ENCODE measurements at regions of chr12 and their contacts with region 1.

Region 1: DNA sequence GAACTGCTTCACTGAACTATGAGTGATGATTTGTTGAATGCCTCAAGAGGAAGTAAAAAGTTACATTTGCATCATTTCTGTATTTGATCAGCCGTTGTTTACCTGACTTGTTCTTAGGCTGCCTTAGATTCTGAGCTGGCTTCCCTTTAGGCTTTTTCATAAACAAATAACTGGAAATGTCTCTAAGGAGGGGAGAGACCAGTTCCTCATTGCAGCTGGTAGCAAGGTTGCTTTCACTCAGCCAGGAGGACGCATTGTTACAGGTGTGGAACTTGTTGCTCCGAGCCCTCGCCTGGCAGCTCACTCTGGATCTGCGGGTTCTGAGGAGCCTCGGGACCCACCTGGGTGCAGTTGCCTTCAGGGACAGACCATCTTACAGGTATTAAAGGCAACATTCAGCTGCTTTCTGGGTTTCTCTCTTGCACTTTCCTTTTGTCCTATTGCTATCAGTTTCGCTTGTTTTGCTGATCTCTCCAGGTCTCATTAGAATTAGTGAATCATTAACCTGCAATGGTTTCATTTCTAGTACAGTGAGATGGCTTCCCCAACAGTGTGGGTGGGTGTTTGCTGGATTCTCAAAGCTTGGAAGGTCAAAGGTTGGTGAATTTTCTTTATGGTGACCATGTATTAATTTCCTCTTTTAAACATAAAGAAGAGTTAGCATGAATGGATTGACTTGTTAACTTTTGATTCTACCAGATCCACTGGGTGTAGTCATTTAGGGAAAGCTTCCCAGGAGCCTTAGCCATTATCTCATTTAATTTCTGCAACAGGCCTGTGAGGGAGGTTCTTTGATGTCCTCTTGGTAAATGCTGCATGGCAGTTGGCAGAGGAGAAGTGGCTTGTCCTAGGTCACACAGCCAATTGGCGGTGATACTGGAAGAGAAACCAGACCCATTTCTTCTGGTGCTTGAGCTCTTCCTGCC is at the start of gene PLEKHG7:
- DNase-seq: peak; percentile 29
- ATAC-seq: peak; percentile 83
- H3K4me3 Mint-ChIP-seq: peak within 1 kb of the TSS; percentile 75
- H3K27ac Mint-ChIP-seq: peak within 1 kb of the TSS; percentile 74
- H3K4me1 Mint-ChIP-seq: peaks cover 38% of the 10 kb centered on the region
- H3K27me3 Mint-ChIP-seq: no peaks in the 10 kb centered on the region
- CTCF ChIP-seq: no peak
- total RNA-seq, gene PLEKHG7: 3.4 and 4.1 TPM in 2 replicates

Region 2: GRCh38 chr12:92445253-92446082 is 257.5 kb before region 1 on chr12:
- CTCF ChIA-PET with region 1: no interaction called
- POLR2A ChIA-PET with region 1: no interaction called
- intact Hi-C with region 1: no loop called
- DNase-seq: peak; percentile 55
- ATAC-seq: peak; percentile 71
- H3K4me3 Mint-ChIP-seq: peak overlapping the region; percentile 67
- H3K27ac Mint-ChIP-seq: peak overlapping the region; percentile 97
- H3K4me1 Mint-ChIP-seq: peaks cover 95% of the 10 kb centered on the region
- H3K27me3 Mint-ChIP-seq: no peaks in the 10 kb centered on the region
- CTCF ChIP-seq: no peak

Region 3: DNA sequence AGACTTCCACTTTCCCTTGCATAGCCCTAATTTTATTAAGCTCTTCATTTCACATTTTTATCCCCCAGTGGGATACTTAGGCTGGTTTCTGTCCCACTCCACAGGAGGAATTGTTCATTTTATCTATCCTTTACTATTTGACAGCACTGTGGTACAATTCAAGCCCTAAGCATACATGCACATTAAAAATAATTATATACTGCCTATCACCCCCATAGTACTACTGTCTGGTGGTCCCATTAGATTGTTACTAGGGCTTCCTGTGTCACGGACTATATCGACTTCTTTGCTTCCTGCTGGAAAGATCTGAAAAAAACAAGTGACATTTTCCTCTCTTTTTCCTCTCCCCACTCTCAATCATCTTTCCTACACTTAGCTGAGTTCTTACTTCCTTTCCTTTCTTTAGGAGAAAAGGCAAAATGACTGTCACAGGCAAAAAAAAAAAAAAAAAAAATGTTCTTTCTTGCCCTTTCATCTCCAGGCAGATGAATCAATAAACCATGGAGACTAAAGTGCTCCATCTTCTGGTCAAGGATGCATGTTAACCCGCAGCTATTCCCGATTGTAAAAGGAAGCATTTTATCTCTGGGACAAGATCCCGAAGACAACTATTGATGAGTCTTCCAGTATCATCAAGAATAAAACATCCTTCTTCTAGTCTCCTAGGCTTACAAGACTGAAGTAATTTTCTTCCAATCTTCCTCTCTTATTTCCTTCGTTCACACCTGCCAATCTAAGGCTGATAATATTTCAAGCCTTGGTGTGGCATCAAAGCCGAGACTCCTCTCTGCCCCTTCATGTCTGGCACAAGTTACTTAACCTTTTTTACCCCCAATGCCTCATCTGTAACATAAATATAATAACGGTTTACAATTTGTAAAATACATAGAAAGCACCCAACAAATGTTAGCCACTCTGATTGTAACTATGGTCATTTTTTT is 94.6 kb before region 1 on chr12:
- CTCF ChIA-PET with region 1: no interaction called
- POLR2A ChIA-PET with region 1: no interaction called
- intact Hi-C with region 1: no loop called
- DNase-seq: no peak
- ATAC-seq: no peak
- H3K4me3 Mint-ChIP-seq: peak overlapping the region; percentile 44
- H3K27ac Mint-ChIP-seq: no peak overlapping the region
- H3K4me1 Mint-ChIP-seq: peaks cover 9% of the 10 kb centered on the region
- H3K27me3 Mint-ChIP-seq: no peaks in the 10 kb centered on the region
- CTCF ChIP-seq: no peak

Region 4: DNA sequence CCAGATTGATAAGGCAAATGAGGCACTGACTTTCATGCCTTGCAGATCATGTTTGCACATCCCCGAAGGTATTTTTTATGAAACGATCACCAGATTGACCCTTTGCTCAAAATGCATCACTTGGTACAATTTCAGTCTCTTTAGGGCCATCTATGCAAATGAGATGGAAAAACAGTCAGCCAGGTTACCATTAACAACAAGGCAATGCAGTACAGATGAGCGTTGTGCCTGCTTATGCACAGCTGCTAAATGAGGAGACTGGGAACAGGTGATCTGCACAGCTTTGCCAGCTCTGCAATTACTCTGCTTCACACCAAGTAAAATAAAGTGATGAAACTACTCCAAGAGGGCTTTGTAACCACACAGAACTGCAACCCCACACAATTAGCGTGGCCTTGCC is 26.3 kb before region 1 on chr12:
- CTCF ChIA-PET with region 1: no interaction called
- POLR2A ChIA-PET with region 1: no interaction called
- intact Hi-C with region 1: no loop called
- DNase-seq: no peak
- ATAC-seq: no peak
- H3K4me3 Mint-ChIP-seq: no peak overlapping the region
- H3K27ac Mint-ChIP-seq: no peak overlapping the region
- H3K4me1 Mint-ChIP-seq: peaks cover 7% of the 10 kb centered on the region
- H3K27me3 Mint-ChIP-seq: no peaks in the 10 kb centered on the region
- CTCF ChIP-seq: no peak

Region 5: DNA sequence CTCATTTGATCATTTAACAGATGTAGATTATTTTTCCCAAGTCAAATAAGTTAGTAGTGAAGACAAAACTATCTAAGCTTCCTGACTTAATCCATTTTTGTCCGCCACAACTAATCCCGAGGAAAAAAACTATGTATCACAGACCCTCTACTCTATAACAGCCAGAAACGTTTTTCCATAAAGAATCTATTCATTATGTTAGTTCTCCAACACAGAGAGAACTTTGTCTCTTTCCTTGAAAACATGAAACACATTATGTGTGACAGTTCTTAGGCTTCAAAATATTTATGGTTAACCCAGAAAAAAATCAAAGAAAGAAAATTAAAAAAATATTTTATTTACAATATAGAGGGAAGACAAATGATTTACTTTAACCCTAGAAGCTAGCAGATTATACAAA is 99.9 kb after region 1 on chr12:
- CTCF ChIA-PET with region 1: no interaction called
- POLR2A ChIA-PET with region 1: no interaction called
- intact Hi-C with region 1: no loop called
- DNase-seq: no peak
- ATAC-seq: no peak
- H3K4me3 Mint-ChIP-seq: no peak overlapping the region
- H3K27ac Mint-ChIP-seq: no peak overlapping the region
- H3K4me1 Mint-ChIP-seq: no peaks in the 10 kb centered on the region
- H3K27me3 Mint-ChIP-seq: no peaks in the 10 kb centered on the region
- CTCF ChIP-seq: no peak

Region 6: DNA sequence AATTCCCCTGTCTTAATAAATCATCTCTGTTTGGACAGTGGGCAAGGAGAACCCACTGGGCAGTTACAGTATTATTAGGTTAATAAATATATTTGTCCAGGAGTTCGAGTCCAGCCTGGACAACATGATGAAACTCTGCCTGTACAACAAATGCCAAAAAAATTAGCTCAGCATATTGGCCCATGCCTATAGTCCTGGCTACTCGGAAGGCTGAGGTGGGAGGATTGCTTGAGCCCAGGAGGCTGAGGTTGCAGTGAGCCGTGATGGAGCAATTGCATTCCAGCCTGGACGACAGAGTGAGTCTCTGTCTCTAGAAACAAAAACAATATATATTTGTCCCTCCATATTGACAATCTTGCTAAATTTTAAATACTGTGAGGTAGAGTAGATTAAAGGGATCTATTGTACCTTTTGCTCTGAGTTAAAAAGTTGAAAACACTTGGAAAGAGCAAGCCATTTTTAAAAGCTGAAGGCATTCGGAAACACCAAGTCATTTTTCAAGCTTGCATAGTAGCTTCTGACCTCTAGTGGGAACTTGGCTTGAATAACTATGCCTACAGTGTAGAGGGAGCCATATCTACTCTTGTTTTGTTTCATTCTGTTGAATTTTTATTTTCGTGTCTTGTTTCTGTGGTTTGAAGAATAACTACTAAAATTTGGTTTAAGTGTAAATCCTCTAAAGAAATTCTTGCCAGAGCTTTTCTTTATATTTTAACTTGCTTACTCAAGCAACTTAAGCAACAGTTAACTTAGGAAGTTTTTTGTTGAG is 240.6 kb after region 1 on chr12:
- CTCF ChIA-PET with region 1: no interaction called
- POLR2A ChIA-PET with region 1: no interaction called
- intact Hi-C with region 1: loop called (anchors 10 kb)
- DNase-seq: no peak
- ATAC-seq: no peak
- H3K4me3 Mint-ChIP-seq: no peak overlapping the region
- H3K27ac Mint-ChIP-seq: peak overlapping the region; percentile 46
- H3K4me1 Mint-ChIP-seq: peaks cover 36% of the 10 kb centered on the region
- H3K27me3 Mint-ChIP-seq: no peaks in the 10 kb centered on the region
- CTCF ChIP-seq: no peak

Measured in activated B cell treated with CpG ODN at 0.5 μM for 24 hours (primary cell).